Caco-2 (cell line): ENCODE measurements at regions of chr6 and their contacts with region 1.

Region 1: DNA sequence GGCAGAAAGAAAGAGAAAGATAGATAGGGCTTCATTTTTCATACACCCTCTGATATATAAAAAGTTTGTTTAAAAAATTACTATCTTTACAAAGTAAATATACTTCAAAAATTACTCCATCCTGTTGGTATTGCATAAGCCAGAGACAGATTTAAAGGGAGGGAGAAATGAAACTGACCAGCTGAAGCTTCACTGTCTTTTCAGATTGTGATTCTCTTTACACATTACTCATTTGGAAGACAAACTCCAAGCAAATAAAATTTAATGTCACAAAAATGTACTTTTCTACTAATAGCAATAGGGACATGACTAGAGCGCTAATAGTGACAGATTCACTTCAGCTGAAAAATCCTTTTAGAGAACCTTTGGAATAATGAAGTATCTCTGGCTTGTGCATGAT is 38.6 kb upstream of the MARCKS start:
- DNase-seq: no peak
- H3K4me3 ChIP-seq: no peak overlapping the region
- H3K4me3 Mint-ChIP-seq: no peak overlapping the region
- H3K27ac Mint-ChIP-seq: no peak overlapping the region
- H3K4me1 ChIP-seq: peaks cover 16% of the 10 kb centered on the region
- H3K4me1 Mint-ChIP-seq: no peaks in the 10 kb centered on the region
- H3K27me3 ChIP-seq: no peaks in the 10 kb centered on the region
- H3K27me3 Mint-ChIP-seq: no peaks in the 10 kb centered on the region
- CTCF ChIP-seq: no peak

Region 2: GRCh38 chr6:113668641-113669408 is 149.8 kb before region 1 on chr6:
- CTCF ChIA-PET with region 1: no interaction called
- POLR2A ChIA-PET with region 1: no interaction called
- intact Hi-C with region 1: no loop called
- DNase-seq: no peak
- H3K4me3 ChIP-seq: no peak overlapping the region
- H3K4me3 Mint-ChIP-seq: no peak overlapping the region
- H3K27ac Mint-ChIP-seq: no peak overlapping the region
- H3K4me1 ChIP-seq: peaks cover 11% of the 10 kb centered on the region
- H3K4me1 Mint-ChIP-seq: peaks cover 9% of the 10 kb centered on the region
- H3K27me3 ChIP-seq: no peaks in the 10 kb centered on the region
- H3K27me3 Mint-ChIP-seq: no peaks in the 10 kb centered on the region
- CTCF ChIP-seq: no peak

Region 3: DNA sequence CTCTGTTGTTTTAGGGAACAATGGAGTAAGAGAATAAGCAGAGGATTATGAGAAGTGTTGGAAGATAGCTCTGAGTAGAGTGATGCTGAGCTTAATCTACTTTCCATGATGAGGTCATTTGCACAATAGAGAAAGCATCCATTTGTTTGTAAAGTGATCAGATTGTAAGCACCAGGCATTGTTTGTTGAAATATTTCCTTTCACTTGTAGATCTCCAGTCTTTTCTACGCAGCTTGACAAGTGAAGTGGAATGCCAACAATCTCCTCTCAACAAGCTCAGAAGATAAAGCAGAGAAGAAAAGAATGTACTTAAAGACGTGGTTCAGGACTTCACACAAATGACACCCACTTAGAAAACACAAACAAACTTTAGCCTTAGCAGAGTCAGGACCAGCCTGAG is 41.6 kb before region 1 on chr6:
- CTCF ChIA-PET with region 1: no interaction called
- POLR2A ChIA-PET with region 1: no interaction called
- intact Hi-C with region 1: loop called (anchors 5 kb)
- DNase-seq: peak in 1 of 2 experiments; percentile 37
- H3K4me3 ChIP-seq: no peak overlapping the region
- H3K4me3 Mint-ChIP-seq: peak overlapping the region; percentile 69
- H3K27ac Mint-ChIP-seq: peak overlapping the region; percentile 93
- H3K4me1 ChIP-seq: peaks cover 38% of the 10 kb centered on the region
- H3K4me1 Mint-ChIP-seq: peaks cover 23% of the 10 kb centered on the region
- H3K27me3 ChIP-seq: no peaks in the 10 kb centered on the region
- H3K27me3 Mint-ChIP-seq: no peaks in the 10 kb centered on the region
- CTCF ChIP-seq: no peak